Endothelial cell of umbilical vein (primary cell): ENCODE measurements at regions of chr9 and their contacts with region 1.

Region 1: DNA sequence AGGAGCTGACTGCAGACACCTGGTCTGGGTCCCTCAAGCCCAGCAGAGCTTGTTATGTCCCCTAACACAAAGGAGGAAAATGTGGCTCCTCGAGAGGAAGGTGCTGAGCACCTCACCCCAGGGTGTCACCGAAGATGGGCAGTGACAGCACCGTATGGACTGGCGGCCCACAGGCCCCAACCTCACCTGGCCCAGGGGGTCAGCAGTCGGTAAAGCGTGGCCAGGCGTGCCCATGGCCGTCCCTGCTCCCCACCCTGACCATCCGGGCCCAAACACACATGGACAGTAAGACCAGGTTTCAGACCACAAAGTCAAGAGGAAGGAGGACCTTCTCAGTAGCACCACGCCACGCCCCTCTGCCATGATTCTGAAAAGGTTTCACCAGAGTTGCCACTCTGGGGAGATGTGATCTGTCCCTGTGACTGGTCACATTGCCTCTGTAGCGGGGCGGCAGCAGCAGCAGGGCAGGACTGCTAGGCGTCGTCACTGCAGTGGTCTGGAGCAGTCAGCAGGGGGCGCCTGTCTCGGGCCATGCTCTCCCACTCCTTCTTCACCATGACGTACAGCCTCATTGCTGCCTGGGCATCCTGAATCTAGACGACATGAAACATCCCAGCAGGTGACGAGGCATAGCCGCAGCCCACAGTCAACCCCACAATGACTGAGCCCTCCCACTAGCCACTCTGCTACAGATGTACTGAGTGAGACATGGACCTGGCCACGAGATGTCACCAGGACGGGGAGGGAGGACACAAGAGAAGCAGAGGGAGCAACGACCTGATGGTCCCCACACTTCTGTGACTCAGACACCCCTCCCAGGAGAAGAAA is 11.1 kb downstream of the REXO4 start:
- DNase-seq: peak; percentile 66
- H3K4me3 ChIP-seq: no peak overlapping the region
- H3K27ac ChIP-seq: no peak overlapping the region
- H3K4me1 ChIP-seq: peaks cover 6% of the 10 kb centered on the region
- H3K27me3 ChIP-seq: no peaks in the 10 kb centered on the region
- CTCF ChIP-seq: peak; percentile 97 to 98
- POLR2A ChIP-seq: no peak

Region 2: GRCh38 chr9:133307301-133307700 is 99.4 kb before region 1 on chr9:
- CTCF ChIA-PET with region 1: no interaction called
- POLR2A ChIA-PET with region 1: no interaction called
- dilution Hi-C with region 1: no loop called
- intact Hi-C with region 1: no loop called
- DNase-seq: no peak
- H3K4me3 ChIP-seq: no peak overlapping the region
- H3K27ac ChIP-seq: no peak overlapping the region
- H3K4me1 ChIP-seq: no peaks in the 10 kb centered on the region
- H3K27me3 ChIP-seq: peaks cover 0 to 2% of the 10 kb centered on the region in 2 experiments
- CTCF ChIP-seq: no peak
- POLR2A ChIP-seq: no peak

Region 3: GRCh38 chr9:133342069-133342406 is 64.7 kb before region 1 on chr9:
- CTCF ChIA-PET with region 1: no interaction called
- POLR2A ChIA-PET with region 1: no interaction called
- dilution Hi-C with region 1: no loop called
- intact Hi-C with region 1: loop called (anchors 1 kb)
- DNase-seq: no peak
- H3K4me3 ChIP-seq: no peak overlapping the region
- H3K27ac ChIP-seq: no peak overlapping the region
- H3K4me1 ChIP-seq: no peaks in the 10 kb centered on the region
- H3K27me3 ChIP-seq: no peaks in the 10 kb centered on the region
- CTCF ChIP-seq: peak; percentile 9 to 29
- POLR2A ChIP-seq: no peak

Region 4: GRCh38 chr9:133459476-133460404 is 53.0 kb after region 1 on chr9 and contains the start of gene CACFD1:
- CTCF ChIA-PET with region 1: no interaction called
- POLR2A ChIA-PET with region 1: no interaction called
- dilution Hi-C with region 1: no loop called
- intact Hi-C with region 1: loop called (anchors 1 kb)
- DNase-seq: peak; percentile 95
- H3K4me3 ChIP-seq: peak within 1 kb of the TSS; percentile 50 to 82 (median 63)
- H3K27ac ChIP-seq: peak within 1 kb of the TSS; percentile 68
- H3K4me1 ChIP-seq: peaks cover 9% of the 10 kb centered on the region
- H3K27me3 ChIP-seq: no peaks in the 10 kb centered on the region
- CTCF ChIP-seq: peak in 1 of 2 donors; percentile 5
- POLR2A ChIP-seq: peak; percentile 67
- total RNA-seq, gene CACFD1: 9.7 and 9.8 TPM in 2 replicates